SK-N-SH (cell line): ENCODE measurements at regions of chr6 and their contacts with region 1.

Region 1: DNA sequence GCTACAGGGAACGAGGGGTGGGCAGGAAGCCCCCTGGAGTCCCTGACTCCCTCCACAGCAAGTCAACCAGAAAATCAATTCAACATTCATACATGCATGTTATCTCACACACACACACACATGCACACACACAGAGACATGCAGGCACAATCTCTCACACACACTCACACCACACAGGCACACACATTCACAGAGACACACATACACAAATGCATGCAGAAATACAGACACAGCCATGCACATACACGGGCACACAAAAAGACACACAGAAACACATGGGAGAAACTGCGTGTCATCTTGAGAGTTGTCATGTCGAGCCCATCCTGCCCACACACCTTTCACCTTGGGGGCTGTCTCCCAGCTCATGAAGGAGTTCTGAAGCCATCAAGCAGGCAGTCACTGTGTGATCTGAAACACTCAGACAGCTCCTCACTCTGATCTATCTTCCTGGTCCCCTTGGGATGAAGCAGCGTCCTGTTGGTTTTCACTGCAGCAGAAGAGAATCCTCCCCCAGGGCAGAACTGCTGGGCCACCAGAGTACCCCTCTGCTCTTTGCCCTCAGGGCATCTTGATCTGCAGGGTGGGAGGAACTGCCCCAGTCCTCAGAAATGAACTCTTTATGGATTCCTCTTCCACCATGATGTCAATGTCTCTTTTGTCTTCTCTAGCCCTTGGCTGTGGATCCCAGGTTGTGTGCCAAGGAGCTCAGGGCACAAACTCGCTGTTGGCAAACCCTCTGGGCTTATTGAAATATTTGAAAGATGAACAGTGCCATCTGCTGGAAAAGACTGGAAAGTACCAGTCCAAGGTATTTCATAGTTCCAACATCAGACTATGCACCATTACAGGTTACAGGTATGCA is 8.8 kb downstream of the RAET1L start:
- DNase-seq: peak; percentile 64
- H3K4me3 ChIP-seq: no peak overlapping the region
- H3K27ac ChIP-seq: no peak overlapping the region
- H3K4me1 ChIP-seq: no peaks in the 10 kb centered on the region
- H3K27me3 ChIP-seq: peaks cover 39% of the 10 kb centered on the region
- CTCF ChIP-seq: peak; percentile 67
- EP300 ChIP-seq: no peak
- RAD21 ChIP-seq: peak; percentile 71

Region 2: DNA sequence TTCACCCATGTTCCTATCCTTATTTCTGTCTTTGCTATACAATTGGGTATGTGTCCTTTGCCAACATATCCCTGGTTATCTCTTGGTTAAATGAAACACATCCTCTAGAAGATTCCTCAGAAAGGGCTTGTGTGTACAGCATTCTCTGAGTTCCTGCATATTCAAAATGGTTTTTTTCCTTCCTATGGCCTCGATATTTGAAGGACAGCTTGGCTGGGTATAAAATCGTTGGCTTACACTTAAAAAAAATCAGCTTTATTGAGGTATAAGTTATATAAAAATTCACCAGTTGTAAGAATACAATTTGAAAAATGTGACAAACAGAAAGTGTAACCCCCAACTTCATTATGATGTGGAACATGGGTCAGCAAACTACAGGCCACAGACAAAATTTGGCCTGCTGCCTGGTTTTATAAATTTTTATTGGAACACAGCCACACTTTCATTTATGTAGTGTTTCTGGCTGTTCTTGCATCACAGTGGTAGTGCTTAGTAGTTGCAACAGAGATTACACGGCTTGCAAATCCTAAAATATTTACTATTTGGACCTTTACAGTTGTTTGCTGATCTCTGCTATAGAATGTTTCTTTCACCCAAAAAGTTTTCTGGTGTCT is 250.3 kb before region 1 on chr6:
- CTCF ChIA-PET with region 1: no interaction called
- POLR2A ChIA-PET with region 1: no interaction called
- DNase-seq: no peak
- H3K4me3 ChIP-seq: no peak overlapping the region
- H3K27ac ChIP-seq: peak overlapping the region in 1 of 2 experiments; percentile 28; a peak in 1 of 4 replicates
- H3K4me1 ChIP-seq: 0 out of 4 replicates have a peak, but pooled peaks cover 0 to 4% of the 10 kb centered on the region in 2 experiments
- H3K27me3 ChIP-seq: no peaks in the 10 kb centered on the region
- CTCF ChIP-seq: no peak
- EP300 ChIP-seq: no peak
- RAD21 ChIP-seq: no peak

Region 3: GRCh38 chr6:149934249-149935156 is 82.1 kb before region 1 on chr6:
- CTCF ChIA-PET with region 1: interaction called, 11 read pairs
- POLR2A ChIA-PET with region 1: no interaction called
- DNase-seq: peak; percentile 57
- H3K4me3 ChIP-seq: no peak overlapping the region; a peak in 1 of 4 replicates
- H3K27ac ChIP-seq: no peak overlapping the region
- H3K4me1 ChIP-seq: peaks cover 0 to 6% of the 10 kb centered on the region in 2 experiments; a peak in 1 of 4 replicates
- H3K27me3 ChIP-seq: peaks cover 40% of the 10 kb centered on the region
- CTCF ChIP-seq: peak; percentile 78
- EP300 ChIP-seq: no peak
- RAD21 ChIP-seq: peak; percentile 82

Region 4: DNA sequence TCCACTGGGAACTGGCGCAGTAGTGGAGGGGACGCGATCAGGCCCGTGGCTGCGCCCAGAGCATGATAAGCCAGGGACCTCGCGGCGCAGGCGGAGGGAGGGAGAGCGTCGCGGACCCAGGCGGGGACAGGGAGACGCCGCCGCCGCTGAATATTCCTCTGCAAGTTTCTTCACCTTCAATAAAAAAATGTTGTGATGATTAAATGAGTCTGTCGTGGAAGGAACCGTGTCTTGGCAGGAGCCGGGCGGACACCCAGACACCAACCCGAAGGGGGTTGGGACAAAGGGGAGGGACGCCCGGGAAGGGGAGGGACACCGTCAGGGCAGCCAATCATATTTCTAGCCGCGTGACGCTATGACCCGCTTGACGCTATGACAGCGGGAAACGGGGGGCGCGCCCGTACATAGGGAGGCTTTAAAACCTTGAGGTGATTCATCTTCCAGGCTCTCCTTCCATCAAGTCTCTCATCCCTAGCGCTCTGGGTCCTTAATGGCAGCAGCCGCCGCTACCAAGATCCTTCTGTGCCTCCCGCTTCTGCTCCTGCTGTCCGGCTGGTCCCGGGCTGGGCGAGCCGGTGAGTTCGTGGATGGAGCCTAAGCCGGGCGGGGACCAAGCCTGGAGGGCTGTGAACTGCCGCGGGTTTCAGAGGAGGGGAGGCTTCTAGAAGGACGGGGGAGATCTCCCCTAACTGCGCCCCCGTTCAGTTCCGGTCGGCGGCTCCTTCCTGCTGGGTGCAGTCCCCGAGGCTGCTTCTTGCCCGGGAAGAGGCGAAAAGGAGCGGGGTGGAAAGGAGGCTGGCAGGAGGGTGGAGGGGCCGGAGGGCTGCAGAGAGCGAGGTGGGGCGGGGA is 74.7 kb before region 1 on chr6 and contains the start of gene ULBP2:
- CTCF ChIA-PET with region 1: interaction called, 13 read pairs
- POLR2A ChIA-PET with region 1: no interaction called
- DNase-seq: peak; percentile 96
- H3K4me3 ChIP-seq: peak within 1 kb of the TSS; percentile 56 to 70
- H3K27ac ChIP-seq: no peak within 1 kb of the TSS
- H3K4me1 ChIP-seq: peaks cover 0 to 8% of the 10 kb centered on the region in 2 experiments; a peak in 1 of 4 replicates
- H3K27me3 ChIP-seq: peaks cover 36% of the 10 kb centered on the region
- CTCF ChIP-seq: no peak
- EP300 ChIP-seq: no peak
- RAD21 ChIP-seq: no peak
- polyA plus RNA-seq, gene ULBP2: 5.0 and 5.3 TPM in 2 replicates

Region 5: DNA sequence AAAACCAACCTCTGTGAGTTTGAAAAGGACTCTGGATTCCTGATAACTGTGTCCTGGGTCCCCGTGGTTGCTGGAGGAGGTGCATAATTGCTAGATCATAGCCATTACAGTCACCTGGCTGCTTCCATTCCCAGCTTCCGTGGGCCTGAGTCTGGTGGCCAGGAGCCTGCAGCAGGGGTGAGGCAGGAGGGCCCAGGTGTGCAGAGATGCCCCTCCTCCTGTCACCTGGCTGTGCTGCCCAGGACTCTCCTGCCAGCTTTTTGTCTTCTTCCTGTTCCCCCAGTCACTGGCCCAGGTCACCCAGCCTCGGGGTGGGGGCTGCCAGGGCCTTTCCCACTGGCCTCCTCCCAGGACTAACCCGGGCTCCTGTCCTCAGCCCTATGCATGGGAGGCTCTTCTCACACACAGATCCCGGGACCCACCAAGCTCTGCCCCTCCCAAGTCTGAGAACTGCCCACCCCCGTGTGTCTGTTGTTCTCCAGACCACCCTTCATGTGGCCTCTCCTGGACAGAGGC is 21.3 kb before region 1 on chr6:
- CTCF ChIA-PET with region 1: interaction called, 10 read pairs
- POLR2A ChIA-PET with region 1: no interaction called
- DNase-seq: no peak
- H3K4me3 ChIP-seq: no peak overlapping the region
- H3K27ac ChIP-seq: no peak overlapping the region
- H3K4me1 ChIP-seq: no peaks in the 10 kb centered on the region
- H3K27me3 ChIP-seq: peaks cover 42% of the 10 kb centered on the region
- CTCF ChIP-seq: no peak
- EP300 ChIP-seq: no peak
- RAD21 ChIP-seq: no peak

Region 6: GRCh38 chr6:150142670-150143515 is 126.3 kb after region 1 on chr6 and contains the start of gene PPP1R14C:
- CTCF ChIA-PET with region 1: no interaction called
- POLR2A ChIA-PET with region 1: no interaction called
- DNase-seq: peak; percentile 42
- H3K4me3 ChIP-seq: no peak within 1 kb of the TSS
- H3K27ac ChIP-seq: no peak within 1 kb of the TSS
- H3K4me1 ChIP-seq: no peaks in the 10 kb centered on the region
- H3K27me3 ChIP-seq: peaks cover 33% of the 10 kb centered on the region
- CTCF ChIP-seq: no peak
- EP300 ChIP-seq: no peak
- RAD21 ChIP-seq: no peak
- polyA plus RNA-seq, gene PPP1R14C: not detected in 2 replicates